Activated B cell treated with CpG ODN at 0.5 μM for 24 hours (primary cell): ENCODE measurements at regions of chr10 and their contacts with region 1.

Region 1: GRCh38 chr10:11611248-11612020 is at the start of gene USP6NL:
- DNase-seq: peak; percentile 82
- ATAC-seq: peak; percentile 72
- H3K4me3 Mint-ChIP-seq: peak within 1 kb of the TSS; percentile 95
- H3K27ac Mint-ChIP-seq: peak within 1 kb of the TSS; percentile 96
- H3K4me1 Mint-ChIP-seq: peaks cover 51% of the 10 kb centered on the region
- H3K27me3 Mint-ChIP-seq: no peaks in the 10 kb centered on the region
- CTCF ChIP-seq: no peak
- total RNA-seq, gene USP6NL: 59.9 and 64.5 TPM in 2 replicates

Region 2: GRCh38 chr10:11113156-11113555 is 498.3 kb before region 1 on chr10:
- CTCF ChIA-PET with region 1: no interaction called
- POLR2A ChIA-PET with region 1: no interaction called
- intact Hi-C with region 1: no loop called
- DNase-seq: no peak
- ATAC-seq: peak; percentile 73
- H3K4me3 Mint-ChIP-seq: no peak overlapping the region
- H3K27ac Mint-ChIP-seq: no peak overlapping the region
- H3K4me1 Mint-ChIP-seq: peaks cover 9% of the 10 kb centered on the region
- H3K27me3 Mint-ChIP-seq: no peaks in the 10 kb centered on the region
- CTCF ChIP-seq: no peak

Region 3: DNA sequence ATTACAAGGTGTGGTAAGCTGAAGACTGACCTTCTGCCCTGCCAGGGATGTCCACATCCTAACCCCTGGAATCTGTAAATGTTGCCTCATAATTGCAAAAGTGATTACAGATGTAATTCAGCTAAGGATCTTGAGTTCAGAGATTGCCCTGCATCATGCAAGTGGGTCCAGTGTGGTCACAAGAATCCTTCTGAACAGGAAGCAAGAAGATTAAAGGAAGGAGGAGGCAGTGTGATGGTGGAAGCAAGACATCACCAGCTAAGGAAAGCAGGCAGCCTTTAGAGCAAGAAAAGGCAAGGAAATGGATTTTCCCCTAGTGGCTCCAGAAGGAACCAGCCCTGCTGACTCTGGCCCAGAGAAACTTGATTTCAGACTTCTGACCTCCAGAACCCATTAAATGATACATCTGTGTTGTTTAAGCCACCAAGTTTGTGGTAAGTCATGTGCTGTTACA is 78.1 kb before region 1 on chr10:
- CTCF ChIA-PET with region 1: interaction called, 3 read pairs
- POLR2A ChIA-PET with region 1: interaction called, 8 read pairs
- intact Hi-C with region 1: loop called (anchors 1 kb)
- DNase-seq: no peak
- ATAC-seq: no peak
- H3K4me3 Mint-ChIP-seq: peak overlapping the region; percentile 56
- H3K27ac Mint-ChIP-seq: peak overlapping the region; percentile 84
- H3K4me1 Mint-ChIP-seq: peaks cover 92% of the 10 kb centered on the region
- H3K27me3 Mint-ChIP-seq: no peaks in the 10 kb centered on the region
- CTCF ChIP-seq: no peak

Region 4: DNA sequence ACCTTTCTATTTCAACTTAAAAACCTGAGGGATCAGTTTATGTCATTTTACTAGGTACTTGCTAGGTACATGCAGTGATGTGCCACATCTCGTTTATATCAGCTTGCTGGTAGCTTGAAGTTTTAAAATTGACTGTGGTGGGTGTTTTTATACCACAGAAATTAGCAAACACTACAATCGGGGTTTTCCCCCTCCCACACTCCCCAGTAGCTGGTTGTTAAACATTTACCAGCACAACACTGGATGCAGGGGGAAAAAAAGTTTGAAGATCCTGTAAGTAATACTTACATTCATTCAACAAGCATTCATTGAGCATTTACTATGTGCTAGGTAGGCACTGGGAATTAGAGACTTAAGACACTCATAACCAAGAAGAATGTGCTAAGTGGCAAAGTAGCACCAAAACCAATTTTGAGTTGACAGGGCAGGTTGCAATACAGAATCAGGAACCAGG is 32.6 kb before region 1 on chr10:
- CTCF ChIA-PET with region 1: interaction called, 7 read pairs
- POLR2A ChIA-PET with region 1: interaction called, 17 read pairs
- intact Hi-C with region 1: loop called (anchors 1 kb)
- DNase-seq: no peak
- ATAC-seq: peak; percentile 72
- H3K4me3 Mint-ChIP-seq: peak overlapping the region; percentile 46
- H3K27ac Mint-ChIP-seq: peak overlapping the region; percentile 67
- H3K4me1 Mint-ChIP-seq: peaks cover 75% of the 10 kb centered on the region
- H3K27me3 Mint-ChIP-seq: no peaks in the 10 kb centered on the region
- CTCF ChIP-seq: no peak

Region 5: GRCh38 chr10:11631890-11632587 is 20.6 kb after region 1 on chr10:
- CTCF ChIA-PET with region 1: interaction called, 4 read pairs
- POLR2A ChIA-PET with region 1: interaction called, 25 read pairs
- intact Hi-C with region 1: loop called (anchors 1 kb)
- DNase-seq: no peak
- ATAC-seq: peak; percentile 97
- H3K4me3 Mint-ChIP-seq: peak overlapping the region; percentile 65
- H3K27ac Mint-ChIP-seq: peak overlapping the region; percentile 95
- H3K4me1 Mint-ChIP-seq: peaks cover 52% of the 10 kb centered on the region
- H3K27me3 Mint-ChIP-seq: no peaks in the 10 kb centered on the region
- CTCF ChIP-seq: no peak

Region 6: DNA sequence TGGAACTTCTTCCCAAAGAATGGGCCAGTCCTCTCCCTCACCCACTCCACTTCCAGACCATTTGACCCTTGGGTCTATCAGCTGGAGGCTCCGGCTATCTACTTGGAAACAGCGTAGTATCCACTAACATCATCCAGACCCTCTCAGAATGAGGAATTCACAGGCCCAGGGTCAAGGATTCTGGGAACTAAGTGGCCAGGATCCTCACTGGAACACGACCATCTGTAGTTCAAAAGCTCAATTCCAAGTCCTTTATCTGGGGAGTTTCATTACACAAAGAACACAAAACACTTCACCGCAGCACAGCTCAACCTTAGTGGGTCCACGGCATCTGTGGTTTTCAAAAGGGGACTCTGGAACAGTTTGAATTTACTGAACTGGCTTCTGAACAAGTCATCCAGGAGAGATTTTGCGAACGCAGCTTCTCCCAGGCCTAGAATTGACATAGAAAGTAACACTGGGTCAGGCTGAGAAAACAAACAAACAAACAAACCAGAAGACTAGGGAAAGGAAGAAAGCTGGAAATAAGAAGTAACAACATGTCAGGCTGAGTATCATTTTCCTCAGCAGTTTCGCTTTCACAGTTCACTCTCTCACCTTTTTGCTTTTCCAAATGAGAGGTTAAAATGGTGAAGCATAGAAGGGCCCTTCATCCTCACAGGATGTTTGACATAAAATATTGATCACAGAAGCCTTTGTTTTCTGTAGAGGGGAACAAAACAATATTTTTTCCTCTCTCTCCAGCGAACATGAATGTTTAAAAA is 57.6 kb after region 1 on chr10:
- CTCF ChIA-PET with region 1: no interaction called
- POLR2A ChIA-PET with region 1: interaction called, 10 read pairs
- intact Hi-C with region 1: no loop called
- DNase-seq: no peak
- ATAC-seq: no peak
- H3K4me3 Mint-ChIP-seq: peak overlapping the region; percentile 68
- H3K27ac Mint-ChIP-seq: peak overlapping the region; percentile 91
- H3K4me1 Mint-ChIP-seq: peaks cover 91% of the 10 kb centered on the region
- H3K27me3 Mint-ChIP-seq: no peaks in the 10 kb centered on the region
- CTCF ChIP-seq: no peak

Region 7: DNA sequence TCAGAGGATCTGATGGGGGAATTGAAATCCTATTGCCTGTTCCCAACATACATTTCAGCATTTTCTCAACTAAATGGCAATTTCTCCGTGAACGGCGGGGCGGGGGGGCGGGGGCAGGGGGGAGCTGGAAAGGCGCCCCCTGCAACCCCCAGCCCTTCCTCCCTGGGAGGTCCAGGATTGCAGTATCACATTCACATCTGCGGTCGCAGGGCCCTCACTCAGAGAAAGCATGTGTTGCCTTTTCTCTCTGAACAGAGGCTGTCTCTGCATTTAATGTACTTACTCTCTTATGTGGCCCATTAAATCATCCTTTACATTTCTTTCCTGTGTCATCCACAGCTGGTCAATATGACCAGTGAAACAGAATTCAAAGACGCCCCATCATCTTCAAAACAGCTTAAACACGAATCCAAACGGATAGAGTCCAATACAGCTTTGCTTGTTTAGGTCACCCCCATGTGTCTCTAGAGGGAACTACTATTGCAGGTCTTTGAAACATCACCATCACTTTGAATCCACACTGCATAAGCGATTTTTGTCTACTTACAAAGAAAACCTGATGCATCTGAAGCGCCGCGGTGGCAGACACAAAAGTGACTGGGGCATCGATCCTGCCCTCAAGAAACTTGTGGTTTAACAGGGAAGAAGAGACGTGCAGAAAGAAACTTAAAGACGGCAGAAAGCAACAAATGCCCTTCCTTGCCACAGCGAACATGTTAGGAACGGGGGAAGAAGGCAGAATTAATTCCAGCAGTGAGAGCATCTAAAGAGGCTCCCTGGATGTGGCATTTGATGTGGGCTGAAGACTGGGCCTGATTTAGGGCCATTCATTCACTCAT is 113.7 kb after region 1 on chr10:
- CTCF ChIA-PET with region 1: interaction called, 6 read pairs
- POLR2A ChIA-PET with region 1: interaction called, 7 read pairs
- intact Hi-C with region 1: loop called (anchors 1 kb)
- DNase-seq: no peak
- ATAC-seq: peak; percentile 95
- H3K4me3 Mint-ChIP-seq: no peak overlapping the region
- H3K27ac Mint-ChIP-seq: peak overlapping the region; percentile 79
- H3K4me1 Mint-ChIP-seq: peaks cover 29% of the 10 kb centered on the region
- H3K27me3 Mint-ChIP-seq: no peaks in the 10 kb centered on the region
- CTCF ChIP-seq: peak; percentile 45